ENCODE measurements at regions of chr3 and their contacts with region 1.

Region 1: DNA sequence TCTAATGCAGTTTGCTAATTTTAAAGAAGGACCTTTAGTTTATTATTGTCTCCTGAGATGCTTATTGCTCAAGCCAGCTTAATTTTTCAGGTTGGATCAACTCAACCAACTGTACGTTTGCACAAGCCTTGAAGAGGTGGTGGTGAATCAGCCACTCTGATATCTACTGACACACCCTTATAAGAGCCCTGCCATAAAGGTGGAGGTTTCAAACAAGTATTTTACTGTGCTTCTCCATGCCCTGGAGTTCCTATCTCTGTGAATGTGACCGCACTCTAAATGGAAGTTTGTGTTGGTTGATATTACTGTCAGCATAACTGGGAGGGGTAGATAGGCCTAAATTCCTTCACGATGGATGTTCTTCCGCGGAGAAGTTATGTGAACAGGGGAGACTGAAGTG is 297.3 kb upstream of the UBE2E1 start:
- DNase-seq: no peak
- ATAC-seq: no peak
- H3K4me3 ChIP-seq: no peak overlapping the region
- H3K27ac ChIP-seq: no peak overlapping the region
- H3K4me1 ChIP-seq: no peaks in the 10 kb centered on the region
- H3K27me3 ChIP-seq: no peaks in the 10 kb centered on the region
- CTCF ChIP-seq: no peak
- EP300 ChIP-seq: no peak
- POLR2A ChIP-seq: no peak
- RAD21 ChIP-seq: no peak

Region 2: DNA sequence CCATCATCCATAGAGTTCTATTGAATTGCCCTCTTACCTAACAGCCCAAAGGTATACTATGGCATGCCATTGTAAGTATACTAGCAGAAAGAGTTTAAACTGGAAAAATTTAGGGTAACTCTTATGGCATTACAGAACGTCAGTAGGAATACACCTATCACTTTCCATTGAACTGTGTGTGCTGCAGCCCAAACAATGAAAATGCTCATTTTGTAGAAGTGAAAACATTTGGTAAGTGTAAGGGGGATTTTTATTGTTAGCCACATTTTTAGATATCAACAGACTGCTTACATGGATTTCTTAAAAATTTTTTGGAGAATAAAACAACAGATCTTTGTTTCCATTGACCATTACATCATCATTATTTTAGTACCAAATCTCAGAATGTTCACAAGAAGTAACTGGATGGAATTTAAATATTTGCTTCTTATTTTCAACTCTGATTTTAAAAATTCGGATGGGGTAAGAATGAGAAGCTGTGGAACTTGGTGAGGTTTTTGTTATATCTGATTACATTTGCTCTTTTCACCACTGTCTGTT is 59.4 kb before region 1 on chr3:
- CTCF ChIA-PET with region 1: no interaction called
- POLR2A ChIA-PET with region 1: no interaction called
- RAD21 ChIA-PET with region 1: no interaction called
- SMC1A ChIA-PET with region 1: no interaction called
- in situ Hi-C with region 1: no loop called
- intact Hi-C with region 1: no loop called
- DNase-seq: no peak
- ATAC-seq: peak; percentile 53
- H3K4me3 ChIP-seq: no peak overlapping the region
- H3K27ac ChIP-seq: no peak overlapping the region
- H3K4me1 ChIP-seq: peaks cover 6% of the 10 kb centered on the region; the same call in 1 of the 2 replicates
- H3K27me3 ChIP-seq: no peaks in the 10 kb centered on the region
- CTCF ChIP-seq: no peak
- EP300 ChIP-seq: no peak
- POLR2A ChIP-seq: no peak
- RAD21 ChIP-seq: no peak

Region 3: GRCh38 chr3:23519314-23520208 is 11.1 kb after region 1 on chr3:
- CTCF ChIA-PET with region 1: interaction called, 10 read pairs
- POLR2A ChIA-PET with region 1: interaction called, 4 read pairs
- RAD21 ChIA-PET with region 1: no interaction called
- SMC1A ChIA-PET with region 1: interaction called, 3 read pairs
- in situ Hi-C with region 1: no loop called
- intact Hi-C with region 1: no loop called
- DNase-seq: peak; percentile 59
- ATAC-seq: peak; percentile 94
- H3K4me3 ChIP-seq: no peak overlapping the region
- H3K27ac ChIP-seq: no peak overlapping the region
- H3K4me1 ChIP-seq: peaks cover 5% of the 10 kb centered on the region; the same call in 1 of the 2 replicates
- H3K27me3 ChIP-seq: no peaks in the 10 kb centered on the region
- CTCF ChIP-seq: no peak
- EP300 ChIP-seq: no peak
- POLR2A ChIP-seq: no peak
- RAD21 ChIP-seq: no peak